Aorta (tissue), 5 donors: ENCODE measurements at regions of chr10 and their contacts with region 1.

Region 1: DNA sequence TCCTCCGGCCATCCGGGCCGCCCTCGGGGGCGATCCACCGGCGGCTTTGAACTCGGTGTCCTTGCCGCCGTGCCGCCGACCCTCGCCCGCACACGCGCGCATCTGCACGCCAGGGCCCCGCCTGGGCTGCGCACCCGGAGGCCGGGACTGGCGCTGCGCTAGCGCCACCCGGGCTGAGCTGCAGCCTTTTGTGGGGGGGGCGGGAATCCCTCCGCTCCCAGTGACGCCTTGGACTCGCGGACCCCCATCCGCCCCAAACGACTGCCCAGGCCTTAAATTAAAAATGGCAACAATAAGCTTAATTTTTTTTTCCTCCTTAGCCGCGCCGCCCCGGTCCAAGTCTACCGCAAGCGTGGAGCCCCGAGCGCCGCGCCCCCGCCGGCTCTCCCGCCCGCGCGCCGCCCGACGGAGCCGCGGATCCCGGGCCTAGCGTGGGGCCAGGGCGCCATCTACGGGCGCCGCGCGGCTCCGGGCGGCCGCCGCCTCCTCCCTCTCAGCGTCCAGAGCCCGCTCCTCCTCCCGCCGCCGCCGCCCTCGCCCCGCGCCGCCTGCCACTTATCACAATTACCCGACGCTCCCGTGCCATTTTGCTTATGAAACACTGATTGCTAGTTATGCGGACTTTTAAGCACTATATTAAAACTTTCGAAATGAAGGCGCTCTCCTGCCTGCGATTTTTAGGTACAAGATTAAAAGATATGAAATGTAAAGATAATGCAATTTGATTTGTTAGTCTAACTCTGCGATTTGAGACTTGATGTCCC is 7.5 kb upstream of the EBF3 start:
- DNase-seq: peak; percentile 57 to 89
- ATAC-seq: peak; percentile 88
- H3K4me3 ChIP-seq: no peak overlapping the region
- H3K27ac ChIP-seq: no peak overlapping the region
- H3K4me1 ChIP-seq: no peaks in the 10 kb centered on the region
- H3K27me3 ChIP-seq: no peaks in the 10 kb centered on the region

Region 2: GRCh38 chr10:129030996-129031843 is 940.3 kb before region 1 on chr10:
- intact Hi-C with region 1: loop called (anchors 2 to 5 kb)
- DNase-seq: peak; percentile 59 to 84
- ATAC-seq: peak; percentile 88
- H3K4me3 ChIP-seq: no peak overlapping the region
- H3K27ac ChIP-seq: no peak overlapping the region
- H3K4me1 ChIP-seq: no peaks in the 10 kb centered on the region
- H3K27me3 ChIP-seq: peaks cover 0 to 4% of the 10 kb centered on the region in 2 donors

Region 3: DNA sequence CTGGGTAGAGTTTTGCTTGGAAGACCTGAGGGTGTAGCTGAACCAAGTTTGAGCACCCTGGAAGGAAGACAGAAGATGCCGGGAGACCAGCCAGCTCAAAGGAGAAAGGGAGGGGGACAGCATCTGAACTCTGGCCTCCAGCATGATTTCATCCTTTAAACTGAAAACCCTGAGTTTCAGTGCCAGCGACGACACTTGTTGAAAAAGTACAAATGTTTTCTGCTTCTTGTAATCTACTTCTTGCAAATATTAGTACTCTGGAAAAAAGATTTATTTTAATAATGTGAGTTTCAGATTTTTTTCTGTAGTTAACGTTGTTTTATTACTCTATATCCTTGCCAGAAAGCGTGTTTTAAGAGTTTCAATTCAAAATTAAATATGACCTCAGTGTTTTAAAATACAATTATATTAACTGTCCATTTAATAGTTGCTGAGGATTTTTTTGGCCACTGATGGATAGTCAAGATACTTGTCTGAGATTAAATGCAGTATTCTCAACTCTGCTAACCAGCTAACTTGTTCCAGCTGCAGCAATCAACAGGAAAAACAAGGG is 276.8 kb before region 1 on chr10:
- intact Hi-C with region 1: loop called in 1 of 2 experiments (anchors 10 kb)
- DNase-seq: peak in 1 of 2 donors; percentile 80
- ATAC-seq: peak; percentile 86
- H3K4me3 ChIP-seq: no peak overlapping the region
- H3K27ac ChIP-seq: no peak overlapping the region
- H3K4me1 ChIP-seq: peaks cover 1 to 9% of the 10 kb centered on the region in 2 donors
- H3K27me3 ChIP-seq: no peaks in the 10 kb centered on the region

Region 4: GRCh38 chr10:129790715-129791446 is 180.7 kb before region 1 on chr10:
- intact Hi-C with region 1: no loop called
- DNase-seq: peak in 1 of 2 donors; percentile 57
- ATAC-seq: no peak
- H3K4me3 ChIP-seq: no peak overlapping the region
- H3K27ac ChIP-seq: no peak overlapping the region
- H3K4me1 ChIP-seq: no peaks in the 10 kb centered on the region
- H3K27me3 ChIP-seq: no peaks in the 10 kb centered on the region

Region 5: DNA sequence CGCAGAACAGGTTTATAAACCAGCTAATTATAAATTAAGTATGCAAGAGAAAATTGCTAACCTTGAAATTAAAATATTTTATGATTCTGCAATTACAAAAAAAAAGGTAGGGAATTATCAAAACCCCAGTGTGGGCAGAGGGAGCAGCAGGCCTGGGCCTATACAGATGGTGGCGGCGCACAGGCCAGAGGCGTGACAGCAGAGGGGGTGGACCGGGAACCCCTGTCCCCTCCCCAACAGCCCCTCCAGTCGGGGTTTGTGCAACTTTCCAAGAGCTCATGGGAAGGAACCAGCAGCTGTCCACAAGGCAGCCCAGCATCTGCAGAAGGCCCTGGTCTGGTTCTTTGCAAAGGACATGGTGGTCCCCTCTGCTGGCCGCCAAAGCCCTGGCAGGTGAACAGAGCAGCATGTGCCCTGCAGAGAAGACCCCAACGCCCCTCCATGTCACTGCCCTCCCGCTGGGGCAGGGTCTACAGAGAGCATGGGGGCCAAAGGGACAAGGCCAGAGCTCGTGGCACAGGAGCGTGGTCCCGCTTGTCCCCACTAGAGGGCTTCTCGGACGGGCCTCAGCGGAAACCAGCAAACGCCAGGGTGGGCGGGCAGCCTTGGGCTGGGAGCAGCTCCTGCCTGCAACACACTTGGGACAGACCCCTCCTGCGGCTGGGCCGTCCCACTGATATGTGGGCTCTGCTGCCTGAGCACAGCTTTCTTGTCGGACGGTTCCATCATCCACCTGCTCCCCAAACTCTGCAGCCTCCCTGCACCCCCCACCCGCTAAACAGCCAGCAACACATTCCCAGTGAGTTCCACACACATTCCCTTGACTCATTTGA is 82.6 kb before region 1 on chr10:
- intact Hi-C with region 1: loop called (anchors 5 to 10 kb)
- DNase-seq: peak in 1 of 2 donors; percentile 87
- ATAC-seq: peak; percentile 85
- H3K4me3 ChIP-seq: no peak overlapping the region
- H3K27ac ChIP-seq: no peak overlapping the region
- H3K4me1 ChIP-seq: no peaks in the 10 kb centered on the region
- H3K27me3 ChIP-seq: no peaks in the 10 kb centered on the region

Region 6: GRCh38 chr10:129915526-129916378 is 55.8 kb before region 1 on chr10:
- intact Hi-C with region 1: no loop called
- DNase-seq: peak in 1 of 2 donors; percentile 72
- ATAC-seq: no peak
- H3K4me3 ChIP-seq: no peak overlapping the region
- H3K27ac ChIP-seq: no peak overlapping the region
- H3K4me1 ChIP-seq: no peaks in the 10 kb centered on the region
- H3K27me3 ChIP-seq: no peaks in the 10 kb centered on the region

Region 7: GRCh38 chr10:130263289-130263688 is 291.7 kb after region 1 on chr10:
- intact Hi-C with region 1: no loop called
- DNase-seq: no peak
- ATAC-seq: no peak
- H3K4me3 ChIP-seq: no peak overlapping the region
- H3K27ac ChIP-seq: no peak overlapping the region
- H3K4me1 ChIP-seq: no peaks in the 10 kb centered on the region
- H3K27me3 ChIP-seq: no peaks in the 10 kb centered on the region